HEK293 (cell line): ENCODE measurements at regions of chr20 and their contacts with region 1.

Region 1: DNA sequence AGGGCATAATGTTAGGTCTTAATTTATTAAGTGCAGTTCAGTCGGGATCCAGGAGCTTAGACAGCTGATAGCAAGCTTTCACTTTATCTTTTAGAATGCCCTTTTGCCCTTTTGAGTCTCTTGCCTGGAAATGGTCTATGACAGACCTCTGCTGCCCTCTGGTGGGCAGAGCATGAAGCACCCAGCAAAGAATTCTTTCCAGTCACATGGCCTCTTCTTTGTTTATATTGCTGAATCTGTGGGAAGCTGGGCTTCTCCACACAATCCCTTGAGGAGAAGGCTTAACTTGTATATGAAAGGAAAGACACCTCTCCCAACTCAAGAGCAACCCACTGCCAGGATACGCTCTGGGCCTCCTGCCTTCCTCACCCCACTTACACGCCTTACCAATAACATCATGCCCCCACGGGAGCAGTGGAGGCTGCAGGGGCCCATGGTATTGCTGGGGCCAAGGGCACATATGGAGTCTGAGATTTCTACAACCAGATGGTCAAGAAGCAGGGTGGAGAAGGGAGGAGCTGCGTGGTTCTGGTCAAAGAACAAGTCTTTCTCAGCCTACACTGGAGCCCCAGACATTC is 20.4 kb downstream of the WFDC3 start:
- H3K4me3 ChIP-seq: no peak overlapping the region
- H3K27ac ChIP-seq: no peak overlapping the region
- H3K4me1 ChIP-seq: no peaks in the 10 kb centered on the region
- CTCF ChIP-seq: peak; percentile 82

Region 2: DNA sequence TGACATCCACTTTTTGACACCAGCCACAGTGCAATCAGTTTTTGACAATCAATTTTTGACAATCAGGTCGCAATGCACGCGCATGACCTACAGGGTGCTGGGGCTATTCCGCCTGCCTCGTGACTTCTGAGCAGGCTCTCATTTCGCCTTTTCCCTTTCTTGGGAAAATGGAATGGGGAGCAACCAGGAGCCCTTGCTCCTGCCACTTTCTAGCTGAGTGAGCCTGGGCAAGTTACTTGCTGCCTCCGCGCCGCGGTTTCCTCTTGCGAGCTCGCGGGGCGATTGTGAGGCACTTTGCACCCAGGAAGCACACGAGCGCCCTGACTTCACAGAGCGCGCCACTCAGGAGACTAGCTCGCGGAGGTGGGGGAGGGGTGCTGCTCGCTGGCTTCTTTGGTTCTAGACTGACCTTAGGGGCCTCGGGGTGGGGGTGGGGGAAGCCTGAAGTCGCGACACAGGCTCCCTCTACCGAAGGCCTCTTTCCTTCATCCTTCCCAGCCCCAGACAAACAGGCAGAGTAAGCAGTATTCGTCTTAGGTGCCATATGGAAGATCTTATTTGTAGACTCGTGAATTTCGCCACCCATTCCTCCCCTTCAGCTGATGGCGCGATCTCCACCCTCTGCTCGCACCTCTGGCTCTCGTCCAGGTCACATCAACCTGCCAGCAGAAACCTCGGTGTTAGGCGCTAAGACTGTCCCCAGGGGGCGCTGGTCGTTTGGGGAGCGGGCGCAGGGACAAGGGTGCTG is 397.7 kb before region 1 on chr20:
- CTCF ChIA-PET with region 1: interaction called, 17 read pairs
- POLR2A ChIA-PET with region 1: interaction called, 3 read pairs
- H3K4me3 ChIP-seq: peak overlapping the region; percentile 29
- H3K27ac ChIP-seq: no peak overlapping the region
- H3K4me1 ChIP-seq: no peaks in the 10 kb centered on the region
- CTCF ChIP-seq: peak; percentile 79

Region 3: DNA sequence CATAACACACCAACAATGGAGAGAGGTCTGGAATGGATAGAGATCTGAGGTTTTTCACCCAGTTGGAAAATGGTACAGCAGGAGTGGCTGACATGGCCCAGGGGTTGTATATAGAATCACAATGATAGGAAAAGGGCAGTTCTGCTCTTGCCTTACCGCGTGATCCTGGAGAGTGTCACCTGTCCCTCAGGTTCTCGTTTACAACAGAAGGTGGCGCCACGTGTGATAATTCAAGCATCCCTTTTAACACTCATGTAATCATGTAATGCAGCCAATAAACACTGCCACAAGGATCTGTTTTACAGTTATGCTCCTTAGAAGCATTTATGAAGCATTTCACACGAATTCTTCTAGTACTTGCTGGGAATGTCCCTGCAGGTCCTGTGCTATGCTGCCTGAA is 314.6 kb before region 1 on chr20:
- CTCF ChIA-PET with region 1: interaction called, 27 read pairs
- POLR2A ChIA-PET with region 1: no interaction called
- H3K4me3 ChIP-seq: no peak overlapping the region
- H3K27ac ChIP-seq: no peak overlapping the region
- H3K4me1 ChIP-seq: no peaks in the 10 kb centered on the region
- CTCF ChIP-seq: no peak

Region 4: GRCh38 chr20:45545754-45546453 is 225.4 kb before region 1 on chr20:
- CTCF ChIA-PET with region 1: interaction called, 19 read pairs
- POLR2A ChIA-PET with region 1: no interaction called
- H3K4me3 ChIP-seq: no peak overlapping the region
- H3K27ac ChIP-seq: no peak overlapping the region
- H3K4me1 ChIP-seq: no peaks in the 10 kb centered on the region
- CTCF ChIP-seq: peak; percentile 35; the same call in 1 of the 2 replicates

Region 5: GRCh38 chr20:45592574-45593189 is 178.6 kb before region 1 on chr20:
- CTCF ChIA-PET with region 1: interaction called, 18 read pairs
- POLR2A ChIA-PET with region 1: no interaction called
- H3K4me3 ChIP-seq: no peak overlapping the region
- H3K27ac ChIP-seq: no peak overlapping the region
- H3K4me1 ChIP-seq: no peaks in the 10 kb centered on the region
- CTCF ChIP-seq: peak; percentile 67; the same call in 1 of the 2 replicates

Region 6: GRCh38 chr20:45685896-45686295 is 85.4 kb before region 1 on chr20:
- CTCF ChIA-PET with region 1: interaction called, 14 read pairs
- POLR2A ChIA-PET with region 1: interaction called, 3 read pairs
- H3K4me3 ChIP-seq: no peak overlapping the region
- H3K27ac ChIP-seq: no peak overlapping the region
- H3K4me1 ChIP-seq: no peaks in the 10 kb centered on the region
- CTCF ChIP-seq: no peak

Region 7: DNA sequence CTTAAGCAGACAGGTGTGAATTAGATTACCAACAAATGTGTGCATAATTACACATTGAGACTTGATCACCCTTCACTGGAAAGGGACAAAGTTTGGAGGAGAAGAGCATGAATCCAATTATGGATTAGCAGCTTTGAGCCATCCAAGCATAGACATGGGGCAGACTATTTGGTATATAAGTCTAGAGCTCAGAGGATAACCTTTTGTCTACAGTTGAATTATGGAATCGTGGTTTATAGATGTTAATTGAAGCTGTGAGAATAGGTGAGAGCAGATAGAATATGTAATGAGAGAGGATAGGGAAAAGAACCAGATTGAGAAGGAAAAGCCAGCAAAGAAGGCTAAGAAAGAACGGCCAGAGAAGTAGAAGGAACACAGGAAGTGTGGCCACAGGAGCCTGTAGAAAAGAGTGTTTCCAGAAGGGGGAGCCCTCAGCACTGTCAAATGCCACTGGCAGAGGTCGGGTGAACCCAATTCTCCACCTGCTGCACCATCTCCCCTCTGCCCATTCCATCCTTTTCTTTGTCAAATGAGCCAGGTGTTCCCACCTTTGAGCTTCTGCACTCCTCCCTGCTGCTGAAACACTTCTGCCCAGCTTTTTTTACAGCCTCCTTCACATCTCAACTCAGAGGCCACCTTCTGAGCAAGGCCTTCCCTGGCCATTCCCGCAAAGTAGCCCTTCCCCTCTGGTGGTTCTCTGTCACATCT is 27.8 kb after region 1 on chr20:
- CTCF ChIA-PET with region 1: interaction called, 21 read pairs
- POLR2A ChIA-PET with region 1: no interaction called
- H3K4me3 ChIP-seq: no peak overlapping the region
- H3K27ac ChIP-seq: no peak overlapping the region
- H3K4me1 ChIP-seq: no peaks in the 10 kb centered on the region
- CTCF ChIP-seq: peak; percentile 82

Region 8: DNA sequence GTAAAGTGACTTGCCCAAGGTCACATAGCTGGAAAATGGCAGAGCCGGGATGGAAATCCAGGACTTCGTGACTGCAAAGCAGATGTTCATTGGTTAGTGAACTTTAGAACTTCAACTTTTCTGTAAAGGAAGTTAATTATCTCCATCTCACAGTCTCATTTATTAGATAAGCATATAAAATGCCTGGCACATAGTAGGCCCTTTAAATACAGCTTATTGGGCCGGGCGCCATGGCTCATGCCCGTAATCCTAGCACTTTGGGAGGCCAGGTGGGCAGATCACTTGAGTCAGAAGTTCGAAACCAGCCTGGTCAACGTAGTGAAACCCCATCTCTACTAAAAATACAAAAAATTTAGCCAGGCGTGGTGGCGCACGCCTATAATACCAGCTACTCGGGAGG is 235.7 kb after region 1 on chr20:
- CTCF ChIA-PET with region 1: no interaction called
- POLR2A ChIA-PET with region 1: no interaction called
- H3K4me3 ChIP-seq: no peak overlapping the region
- H3K27ac ChIP-seq: no peak overlapping the region
- H3K4me1 ChIP-seq: no peaks in the 10 kb centered on the region
- CTCF ChIP-seq: no peak

Region 9: DNA sequence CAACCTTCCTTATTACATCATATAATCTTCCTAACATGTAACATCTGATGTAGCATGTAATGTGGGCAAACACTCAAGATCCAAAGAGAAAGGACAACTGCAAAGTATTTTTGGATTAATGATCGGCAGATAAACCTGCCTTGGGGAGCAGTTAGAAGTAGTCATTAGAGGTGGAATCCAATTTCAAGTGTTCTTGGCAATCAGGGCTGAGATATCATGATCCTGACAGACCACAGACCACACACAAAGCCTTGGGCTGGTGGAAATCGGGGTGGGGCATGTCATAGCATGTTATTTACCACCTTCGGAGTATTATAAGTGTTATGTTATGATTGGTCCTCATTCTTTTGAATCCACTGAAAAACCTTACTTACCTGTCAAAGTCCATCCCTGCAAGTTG is 302.2 kb after region 1 on chr20:
- CTCF ChIA-PET with region 1: no interaction called
- POLR2A ChIA-PET with region 1: no interaction called
- H3K4me3 ChIP-seq: no peak overlapping the region
- H3K27ac ChIP-seq: no peak overlapping the region
- H3K4me1 ChIP-seq: peaks cover 6% of the 10 kb centered on the region; the same call in 1 of the 2 replicates
- CTCF ChIP-seq: no peak